Gastrocnemius medialis (tissue), 4 donors: ENCODE measurements at regions of chr17 and their contacts with region 1.

Region 1: GRCh38 chr17:47840740-47841603 is at the start of gene SCRN2:
- DNase-seq: peak; percentile 75 to 89
- ATAC-seq: peak; percentile 90 to 96
- H3K4me3 ChIP-seq: peak within 1 kb of the TSS; percentile 83 to 97 (median 90)
- H3K27ac ChIP-seq: peak within 1 kb of the TSS; percentile 77 to 89 (median 83)
- H3K4me1 ChIP-seq: peaks cover 10 to 13% of the 10 kb centered on the region in 2 donors
- H3K27me3 ChIP-seq: peaks cover 0 to 15% (median 7%) of the 10 kb centered on the region in 3 donors
- CTCF ChIP-seq: peak; percentile 96 to 99 (median 98)
- POLR2A ChIP-seq: no peak
- total RNA-seq, gene SCRN2: 11.0 to 22.3 (median 16.8) TPM

Region 2: GRCh38 chr17:47889734-47890529 is 49.0 kb after region 1 on chr17:
- in situ Hi-C with region 1: loop called (anchors 5 kb)
- intact Hi-C with region 1: loop called (anchors 1 kb)
- DNase-seq: peak; percentile 61 to 82
- ATAC-seq: peak; percentile 92 to 98
- H3K4me3 ChIP-seq: no peak overlapping the region
- H3K27ac ChIP-seq: no peak overlapping the region
- H3K4me1 ChIP-seq: peaks cover 4 to 8% of the 10 kb centered on the region in 2 donors
- H3K27me3 ChIP-seq: no peaks in the 10 kb centered on the region
- CTCF ChIP-seq: peak; percentile 80 to 96 (median 95)
- POLR2A ChIP-seq: no peak

Region 3: DNA sequence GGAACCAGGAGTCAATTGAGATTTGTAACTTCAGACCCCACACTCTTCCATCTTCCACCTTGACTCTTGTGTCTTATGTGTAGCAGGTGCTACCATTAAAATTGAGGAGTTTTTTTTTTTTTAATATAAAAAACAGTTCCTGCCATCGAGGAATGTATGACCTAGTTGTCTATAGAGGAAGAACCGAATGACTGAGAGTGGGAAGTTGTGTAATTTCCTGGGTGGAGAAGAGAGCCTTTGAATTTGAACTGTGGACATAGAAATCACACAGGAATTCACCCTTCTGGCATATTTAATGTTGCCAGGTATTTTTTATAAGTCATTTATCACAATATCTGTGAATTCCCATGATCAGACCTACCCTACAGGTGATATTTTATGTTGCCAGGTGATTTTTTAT is 77.0 kb after region 1 on chr17:
- in situ Hi-C with region 1: no loop called
- intact Hi-C with region 1: no loop called
- DNase-seq: no peak
- ATAC-seq: no peak
- H3K4me3 ChIP-seq: no peak overlapping the region
- H3K27ac ChIP-seq: no peak overlapping the region
- H3K4me1 ChIP-seq: peaks cover 8 to 15% of the 10 kb centered on the region in 2 donors
- H3K27me3 ChIP-seq: no peaks in the 10 kb centered on the region
- CTCF ChIP-seq: no peak
- POLR2A ChIP-seq: no peak

Region 4: GRCh38 chr17:47941236-47941994 is 100.4 kb after region 1 on chr17 and contains the start of gene PNPO:
- in situ Hi-C with region 1: no loop called
- intact Hi-C with region 1: loop called (anchors 10 kb)
- DNase-seq: peak; percentile 95 to 97
- ATAC-seq: peak; percentile 100
- H3K4me3 ChIP-seq: peak within 1 kb of the TSS; percentile 77 to 99 (median 88)
- H3K27ac ChIP-seq: peak within 1 kb of the TSS; percentile 88 to 98 (median 92)
- H3K4me1 ChIP-seq: peaks cover 13 to 20% of the 10 kb centered on the region in 2 donors
- H3K27me3 ChIP-seq: no peaks in the 10 kb centered on the region
- CTCF ChIP-seq: peak in 2 of 5 experiments; percentile 23 to 24
- POLR2A ChIP-seq: peak; percentile 55 to 71
- total RNA-seq, gene PNPO: 27.9 to 64.0 (median 41.5) TPM

Region 5: GRCh38 chr17:47957591-47958428 is 116.8 kb after region 1 on chr17 and contains the start of gene PRR15L:
- in situ Hi-C with region 1: loop called in 3 of 4 experiments (anchors 10 kb)
- intact Hi-C with region 1: no loop called
- DNase-seq: no peak
- ATAC-seq: no peak
- H3K4me3 ChIP-seq: no peak within 1 kb of the TSS
- H3K27ac ChIP-seq: no peak within 1 kb of the TSS
- H3K4me1 ChIP-seq: no peaks in the 10 kb centered on the region
- H3K27me3 ChIP-seq: no peaks in the 10 kb centered on the region
- CTCF ChIP-seq: no peak
- POLR2A ChIP-seq: no peak
- total RNA-seq, gene PRR15L: 0.87 TPM in 1 of 4 donors, not detected in the others

Region 6: DNA sequence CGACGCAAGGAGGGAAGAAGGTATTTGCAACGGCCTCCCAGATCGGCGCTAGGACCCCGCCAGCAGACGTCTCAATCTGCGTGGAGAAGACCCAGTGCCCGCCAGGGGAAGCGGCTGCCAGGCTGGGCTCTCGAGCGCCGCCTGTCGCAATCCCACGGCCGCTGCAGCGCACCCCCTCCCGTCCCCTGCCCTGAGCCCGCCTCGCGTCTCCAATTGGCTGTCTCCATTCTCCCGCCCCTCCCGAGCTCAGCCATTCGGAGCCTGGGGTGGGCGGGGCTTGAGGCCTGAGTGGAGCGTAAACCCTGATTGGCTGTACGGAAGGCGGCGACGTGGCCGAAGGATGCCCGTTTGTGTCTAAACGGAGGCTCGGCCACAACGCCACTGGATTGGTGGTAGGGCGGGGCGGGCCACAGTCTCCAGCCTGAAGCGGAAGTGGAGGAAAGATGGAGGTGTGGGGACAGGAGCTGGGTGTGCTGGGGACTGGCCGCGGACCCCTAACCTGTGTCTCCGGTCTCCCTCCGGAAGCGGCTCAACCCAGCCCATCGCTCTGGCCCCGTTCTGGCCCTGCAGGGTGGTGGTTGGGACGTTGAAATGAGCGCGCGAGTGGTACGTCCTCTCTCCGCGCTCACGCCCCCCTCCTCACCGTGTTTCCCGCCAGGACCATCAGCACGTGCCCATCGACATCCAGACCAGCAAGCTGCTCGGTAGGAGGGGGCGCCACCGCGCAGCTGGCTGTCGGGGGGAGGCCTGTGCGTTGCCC is 129.9 kb after region 1 on chr17 and contains the start of gene CDK5RAP3:
- in situ Hi-C with region 1: loop called in 2 of 4 experiments (anchors 10 kb)
- intact Hi-C with region 1: loop called (anchors 1 kb)
- DNase-seq: peak; percentile 100
- ATAC-seq: peak; percentile 98 to 99
- H3K4me3 ChIP-seq: peak within 1 kb of the TSS; percentile 77 to 100 (median 90)
- H3K27ac ChIP-seq: peak within 1 kb of the TSS; percentile 85 to 89 (median 88)
- H3K4me1 ChIP-seq: peaks cover 6 to 18% of the 10 kb centered on the region in 2 donors
- H3K27me3 ChIP-seq: no peaks in the 10 kb centered on the region
- CTCF ChIP-seq: peak; percentile 95 to 96 (median 96)
- POLR2A ChIP-seq: peak; percentile 71 to 74
- total RNA-seq, gene CDK5RAP3: 14.2 to 35.9 (median 27.8) TPM

Region 7: DNA sequence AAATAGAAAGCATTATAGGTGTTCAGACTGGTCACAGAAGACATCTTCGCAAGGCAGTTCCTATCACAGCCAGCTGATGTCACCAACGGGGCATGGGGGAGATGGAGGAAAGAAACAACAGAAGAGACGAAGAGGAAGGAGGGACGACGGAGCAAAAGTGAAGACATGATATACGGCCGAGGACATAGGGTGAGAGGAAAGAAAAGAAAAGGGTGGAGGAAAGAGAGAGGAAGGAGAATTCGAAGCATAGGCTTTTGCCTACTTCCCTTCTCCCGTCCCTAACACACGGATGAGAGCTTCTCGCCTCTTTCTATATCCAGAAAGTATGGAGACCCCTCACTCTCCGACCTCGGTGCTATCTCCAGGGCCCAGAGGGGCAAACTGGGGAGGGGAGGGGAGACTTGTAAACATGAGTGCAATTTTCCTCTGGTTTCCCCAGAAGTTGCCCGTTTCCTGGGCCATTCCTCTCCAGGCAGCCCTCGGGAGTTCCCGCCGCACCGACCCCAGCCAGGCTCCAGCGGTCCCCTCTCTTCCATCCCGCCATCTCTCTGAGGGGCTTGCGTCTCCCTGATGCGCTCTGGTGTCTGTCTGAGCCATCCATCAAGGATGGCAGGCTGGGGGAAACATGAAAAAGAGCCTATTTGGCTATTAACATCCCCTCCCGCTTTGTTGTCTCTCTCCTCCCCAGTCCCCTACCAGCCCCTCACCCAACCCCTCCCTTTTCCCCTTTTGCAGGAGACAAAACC is 170.6 kb after region 1 on chr17:
- in situ Hi-C with region 1: no loop called
- intact Hi-C with region 1: loop called (anchors 5 kb)
- DNase-seq: no peak
- ATAC-seq: no peak
- H3K4me3 ChIP-seq: peak overlapping the region in 3 of 4 donors; percentile 21 to 56 (median 37)
- H3K27ac ChIP-seq: no peak overlapping the region
- H3K4me1 ChIP-seq: peaks cover 6% of the 10 kb centered on the region in 2 donors
- H3K27me3 ChIP-seq: peaks cover 23 to 45% (median 39%) of the 10 kb centered on the region in 3 donors
- CTCF ChIP-seq: peak in 2 of 5 experiments; percentile 16 to 52
- POLR2A ChIP-seq: no peak